ENCODE measurements at regions of chr14 and their contacts with region 1.

Region 1: DNA sequence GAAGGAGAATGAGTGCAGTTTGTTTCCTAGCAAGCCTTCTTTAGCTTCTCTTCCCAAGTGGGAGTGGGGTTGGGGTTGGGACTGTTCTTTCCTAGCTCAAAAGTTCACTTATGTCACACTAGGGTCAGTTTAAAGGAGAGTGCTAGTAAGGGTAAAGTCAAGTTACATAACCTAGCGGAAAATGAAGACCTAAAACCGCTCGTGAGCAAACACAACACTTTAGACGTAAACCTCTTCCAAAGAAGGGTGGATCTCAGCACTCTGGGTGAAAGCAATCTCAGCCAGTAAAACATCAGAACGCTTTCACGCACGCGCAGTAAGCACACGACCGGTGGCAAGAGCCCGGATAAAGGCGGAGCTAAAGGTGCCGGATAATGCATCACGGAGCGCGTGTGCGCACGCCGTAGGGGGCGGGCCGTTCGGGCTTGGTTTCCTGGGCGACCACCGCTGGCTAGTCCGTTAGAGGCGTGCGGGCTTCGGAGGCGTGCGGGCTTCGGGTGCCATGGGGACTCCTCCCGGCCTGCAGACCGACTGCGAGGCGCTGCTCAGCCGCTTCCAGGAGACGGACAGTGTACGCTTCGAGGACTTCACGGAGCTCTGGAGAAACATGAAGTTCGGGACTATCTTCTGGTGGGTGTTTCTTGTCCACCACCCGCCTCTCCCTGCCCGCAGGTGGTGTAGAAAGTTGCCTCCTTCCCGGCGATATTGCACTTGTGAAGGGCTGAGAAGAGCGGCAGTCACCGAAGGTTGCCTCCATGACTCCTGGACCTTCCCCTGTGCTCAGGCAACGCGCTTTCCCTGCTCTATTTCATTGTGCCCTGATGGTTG is at the start of gene SNAPC1:
- DNase-seq: peak; percentile 98
- ATAC-seq: peak; percentile 97
- H3K4me3 Mint-ChIP-seq: peak within 1 kb of the TSS; percentile 99
- H3K27ac Mint-ChIP-seq: peak within 1 kb of the TSS; percentile 100
- H3K4me1 Mint-ChIP-seq: peaks cover 44% of the 10 kb centered on the region
- H3K27me3 Mint-ChIP-seq: no peaks in the 10 kb centered on the region
- CTCF ChIP-seq: no peak
- total RNA-seq, gene SNAPC1: 9.5 to 10.2 TPM (median 10.1 TPM) in 3 replicates

Region 2: DNA sequence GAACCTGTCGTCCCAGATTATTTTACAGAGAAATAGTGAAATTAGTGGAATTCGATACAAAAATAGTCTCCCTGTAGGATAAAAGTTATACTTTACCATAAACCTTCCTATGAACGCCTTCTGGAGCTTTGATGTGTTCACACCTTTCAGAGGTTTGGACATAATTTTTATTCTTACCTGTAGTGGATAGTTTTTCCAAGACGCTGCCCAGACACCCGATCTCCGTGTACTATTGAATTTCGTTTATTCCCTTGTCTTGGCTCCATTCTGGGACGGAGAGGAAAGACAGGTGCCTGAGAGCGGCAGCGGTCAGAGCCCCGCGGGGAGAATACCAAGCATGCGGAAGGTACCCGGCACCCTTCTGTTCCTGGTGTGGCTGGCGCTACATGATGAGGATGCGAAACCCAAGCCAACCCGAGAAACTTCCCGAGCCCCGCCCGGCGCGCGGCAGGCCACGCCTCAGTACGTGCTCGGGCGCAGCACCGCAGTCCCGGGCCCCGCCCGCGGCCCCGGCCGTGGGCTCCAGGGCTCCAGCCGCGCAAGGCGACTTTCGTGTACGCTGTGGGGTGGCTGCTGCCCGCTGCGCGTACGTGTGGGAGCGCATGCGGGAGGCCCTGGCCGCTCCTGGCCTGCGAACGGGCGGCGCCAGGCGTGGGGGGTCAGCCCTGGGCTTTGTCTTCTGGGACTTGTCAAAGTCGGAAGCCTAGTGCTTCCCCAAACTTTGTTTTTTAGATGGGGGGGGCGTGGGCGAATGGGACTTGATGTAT is 11.3 kb before region 1 on chr14:
- CTCF ChIA-PET with region 1: interaction called, 7 read pairs
- POLR2A ChIA-PET with region 1: interaction called, 15 read pairs
- DNase-seq: peak; percentile 86
- ATAC-seq: peak; percentile 88
- H3K4me3 Mint-ChIP-seq: peak overlapping the region; percentile 85
- H3K27ac Mint-ChIP-seq: peak overlapping the region; percentile 95
- H3K4me1 Mint-ChIP-seq: peaks cover 62% of the 10 kb centered on the region
- H3K27me3 Mint-ChIP-seq: no peaks in the 10 kb centered on the region
- CTCF ChIP-seq: no peak

Region 3: DNA sequence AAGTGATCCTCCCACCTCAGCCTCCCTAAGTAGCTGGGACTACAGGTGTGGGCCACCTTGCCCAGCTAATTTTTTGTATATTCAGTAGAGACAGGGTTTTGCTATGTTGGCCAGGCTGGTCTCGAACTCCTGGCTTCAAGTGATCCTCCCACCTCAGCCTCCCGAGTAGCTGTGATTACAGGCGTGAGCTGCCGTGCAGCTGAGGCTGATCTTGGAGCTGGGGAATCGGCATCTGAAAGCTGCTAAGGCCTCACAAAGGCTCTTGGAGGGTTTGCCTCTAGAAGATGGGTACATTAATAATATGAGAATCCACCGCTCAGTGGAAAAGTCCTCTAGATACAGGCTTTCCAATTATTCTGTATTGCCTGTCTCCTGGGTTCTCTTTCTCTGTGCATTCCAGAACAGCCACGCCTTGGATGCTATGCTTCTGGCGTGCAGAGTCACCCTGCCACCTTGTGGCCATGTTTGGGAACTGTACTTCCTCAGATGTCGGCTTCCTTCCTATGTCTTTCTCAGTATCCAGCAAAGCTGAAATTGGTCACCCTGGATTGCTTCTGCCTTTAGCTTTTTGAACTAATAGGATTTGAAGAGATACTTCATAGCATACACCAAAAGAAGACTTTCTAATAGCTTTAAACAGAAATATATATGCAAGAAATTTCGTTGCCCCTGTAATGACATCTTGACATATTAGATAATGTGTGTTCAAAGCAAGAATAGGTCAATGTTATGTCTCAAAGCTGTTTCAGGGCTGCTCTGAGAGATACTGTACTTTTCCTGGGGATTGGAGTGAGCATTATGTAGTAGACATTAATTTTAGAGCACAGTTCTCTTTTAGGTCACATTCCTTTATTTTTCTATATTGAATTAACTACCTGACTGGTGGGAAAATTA is 75.4 kb after region 1 on chr14:
- CTCF ChIA-PET with region 1: interaction called, 13 read pairs
- POLR2A ChIA-PET with region 1: no interaction called
- DNase-seq: peak; percentile 78
- ATAC-seq: peak; percentile 92
- H3K4me3 Mint-ChIP-seq: no peak overlapping the region
- H3K27ac Mint-ChIP-seq: no peak overlapping the region
- H3K4me1 Mint-ChIP-seq: peaks cover 17% of the 10 kb centered on the region
- H3K27me3 Mint-ChIP-seq: no peaks in the 10 kb centered on the region
- CTCF ChIP-seq: peak; percentile 81

Measured in WTC11 (cell line).